Dendritic cell treated with granulocyte-macrophage colony-stimulating factor and Interleukin-4, amounts not matched to agents 40 ng/mL and 50 ng/mL, for 4 days (primary cell): ENCODE measurements at regions of chr1 and their contacts with region 1.

Region 1: GRCh38 chr1:28926629-28927265 is 12.4 kb downstream of the EPB41 start:
- H3K4me3 Mint-ChIP-seq: peak overlapping the region; percentile 23
- H3K27ac Mint-ChIP-seq: peak overlapping the region; percentile 76
- H3K4me1 Mint-ChIP-seq: peaks cover 20% of the 10 kb centered on the region
- H3K27me3 Mint-ChIP-seq: no peaks in the 10 kb centered on the region

Region 2: DNA sequence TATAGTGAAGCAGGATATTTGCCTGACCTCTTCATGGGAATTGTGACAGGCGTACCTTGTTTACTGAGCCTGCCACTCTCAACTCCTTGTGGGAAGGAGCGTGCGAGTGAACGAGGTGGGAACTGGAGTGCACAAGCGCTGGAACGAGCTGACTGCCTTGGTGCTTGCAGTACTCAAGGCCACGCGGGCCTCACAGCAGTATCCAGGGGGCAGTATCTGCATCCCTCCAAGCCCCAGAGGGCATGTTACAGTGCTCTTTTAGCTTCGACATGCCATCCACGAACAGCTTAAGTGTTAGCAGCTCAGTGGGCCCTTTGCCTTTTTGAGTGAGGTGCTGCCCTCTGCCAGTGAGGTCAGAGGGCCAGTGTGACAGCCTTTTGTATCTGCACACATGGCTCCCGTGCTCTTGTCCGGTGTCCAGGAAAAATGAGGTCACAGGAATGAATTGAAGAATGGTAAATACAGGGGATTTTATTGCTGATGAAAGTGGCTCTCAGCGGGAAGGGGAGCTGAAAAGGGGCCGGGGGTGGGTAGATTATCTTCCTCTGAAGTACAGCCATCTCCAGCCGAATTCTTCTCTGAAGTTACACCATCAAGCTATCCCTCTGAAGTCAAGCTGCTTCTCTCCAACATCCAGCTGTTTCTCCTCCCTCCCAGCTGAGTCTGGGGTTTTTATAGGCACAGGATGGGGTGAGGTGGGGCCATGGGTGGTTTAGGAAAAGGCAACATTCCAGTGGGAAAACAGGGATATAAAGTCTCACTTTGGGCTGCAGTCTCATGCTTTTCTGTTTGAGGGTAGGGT is 57.0 kb after region 1 on chr1:
- intact Hi-C with region 1: loop called (anchors 10 kb)
- H3K4me3 Mint-ChIP-seq: no peak overlapping the region
- H3K27ac Mint-ChIP-seq: no peak overlapping the region
- H3K4me1 Mint-ChIP-seq: peaks cover 15% of the 10 kb centered on the region
- H3K27me3 Mint-ChIP-seq: no peaks in the 10 kb centered on the region